GM12878 (cell line): ENCODE measurements at regions of chr7 and their contacts with region 1.

Region 1: DNA sequence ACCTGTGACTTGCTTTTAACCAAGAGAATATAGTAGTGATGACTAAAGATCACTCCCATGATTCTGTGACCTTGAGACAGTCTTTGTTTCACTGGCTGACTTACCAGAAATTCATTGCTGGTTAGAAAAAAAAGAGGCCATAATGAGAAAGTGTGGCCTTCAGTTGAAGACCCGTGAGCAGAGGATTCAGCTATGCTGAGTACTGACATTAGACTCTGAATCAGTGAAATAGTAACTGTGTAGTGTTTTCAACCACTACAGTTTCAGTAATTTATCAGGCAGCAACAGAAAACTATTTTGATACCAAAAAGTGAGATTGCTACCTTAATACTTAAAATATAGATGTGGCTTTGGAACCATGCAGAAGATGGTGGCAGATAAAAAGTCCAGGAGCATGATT is 298.0 kb upstream of the KCND2 start:
- DNase-seq: no peak
- ATAC-seq: peak; percentile 21; the same call in 1 of the 3 replicates
- H3K4me3 ChIP-seq: no peak overlapping the region
- H3K27ac ChIP-seq: no peak overlapping the region
- H3K4me1 ChIP-seq: no peaks in the 10 kb centered on the region
- H3K27me3 ChIP-seq: no peaks in the 10 kb centered on the region
- CTCF ChIP-seq: no peak
- EP300 ChIP-seq: no peak
- POLR2A ChIP-seq: no peak
- RAD21 ChIP-seq: no peak

Region 2: GRCh38 chr7:119472408-119473038 is 502.4 kb before region 1 on chr7:
- CTCF ChIA-PET with region 1: no interaction called
- POLR2A ChIA-PET with region 1: no interaction called
- RAD21 ChIA-PET with region 1: no interaction called
- SMC1A ChIA-PET with region 1: no interaction called
- in situ Hi-C with region 1: no loop called
- intact Hi-C with region 1: loop called (anchors 10 kb)
- DNase-seq: no peak
- ATAC-seq: no peak
- H3K4me3 ChIP-seq: no peak overlapping the region
- H3K27ac ChIP-seq: no peak overlapping the region
- H3K4me1 ChIP-seq: no peaks in the 10 kb centered on the region
- H3K27me3 ChIP-seq: no peaks in the 10 kb centered on the region
- CTCF ChIP-seq: no peak
- EP300 ChIP-seq: no peak
- POLR2A ChIP-seq: no peak
- RAD21 ChIP-seq: no peak